Ovary (tissue), 10 donors: ENCODE measurements at regions of chr4 and their contacts with region 1.

Region 1: DNA sequence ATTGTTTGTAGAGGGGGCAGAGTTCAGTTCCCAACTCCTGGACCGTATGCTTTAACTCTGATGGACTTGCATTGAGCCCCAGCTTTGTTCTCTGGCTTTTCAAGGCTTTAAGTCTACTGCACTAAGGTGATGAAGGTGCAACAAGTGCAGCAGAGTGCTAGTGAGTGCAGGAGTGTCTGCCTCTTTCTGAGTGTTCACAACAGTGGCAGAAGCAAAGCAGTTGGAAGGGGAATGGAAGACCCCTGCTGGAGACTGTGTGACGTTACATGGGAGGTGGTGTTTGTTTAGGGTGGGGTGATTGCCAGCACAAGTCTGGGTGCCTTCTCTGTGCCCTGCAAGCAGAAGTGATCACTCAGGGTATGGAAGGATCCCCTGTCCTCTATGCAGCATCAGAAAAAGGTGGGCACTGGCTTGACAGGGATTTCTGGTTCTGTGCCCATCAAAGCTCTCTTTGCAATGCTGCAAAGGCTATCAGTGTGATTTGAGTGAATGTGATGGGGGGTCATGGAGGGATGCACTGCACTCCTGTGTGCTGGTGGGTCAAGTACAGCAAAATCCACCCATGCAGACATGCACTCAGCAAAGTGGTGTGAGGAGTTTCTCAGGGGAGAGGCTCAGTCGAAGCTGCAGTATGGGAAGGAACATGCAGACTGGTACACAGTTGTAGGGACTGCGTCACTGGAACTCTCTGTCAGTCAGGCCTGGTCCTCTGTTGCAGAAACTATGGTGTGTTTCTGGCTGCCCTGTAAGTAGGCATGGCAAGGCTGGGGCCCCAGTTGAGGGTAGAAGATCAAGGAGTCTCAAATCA is 70.9 kb upstream of the UGT2B7 start:
- DNase-seq: no peak
- H3K4me3 ChIP-seq: no peak overlapping the region
- H3K27ac ChIP-seq: no peak overlapping the region
- H3K4me1 ChIP-seq: no peaks in the 10 kb centered on the region
- H3K27me3 ChIP-seq: no peaks in the 10 kb centered on the region
- CTCF ChIP-seq: no peak
- EP300 ChIP-seq: no peak
- POLR2A ChIP-seq: no peak

Region 2: GRCh38 chr4:69057620-69058409 is 32.4 kb after region 1 on chr4:
- intact Hi-C with region 1: loop called in 1 of 4 experiments (anchors 2 kb)
- DNase-seq: no peak
- H3K4me3 ChIP-seq: no peak overlapping the region
- H3K27ac ChIP-seq: no peak overlapping the region
- H3K4me1 ChIP-seq: no peaks in the 10 kb centered on the region
- H3K27me3 ChIP-seq: no peaks in the 10 kb centered on the region
- CTCF ChIP-seq: no peak
- EP300 ChIP-seq: no peak
- POLR2A ChIP-seq: no peak

Region 3: GRCh38 chr4:69075061-69075792 is 49.8 kb after region 1 on chr4:
- intact Hi-C with region 1: no loop called
- DNase-seq: no peak
- H3K4me3 ChIP-seq: no peak overlapping the region
- H3K27ac ChIP-seq: no peak overlapping the region
- H3K4me1 ChIP-seq: no peaks in the 10 kb centered on the region
- H3K27me3 ChIP-seq: no peaks in the 10 kb centered on the region
- CTCF ChIP-seq: no peak
- EP300 ChIP-seq: no peak
- POLR2A ChIP-seq: no peak

Region 4: GRCh38 chr4:69104719-69105275 is 79.4 kb after region 1 on chr4:
- intact Hi-C with region 1: no loop called
- DNase-seq: no peak
- H3K4me3 ChIP-seq: no peak overlapping the region
- H3K27ac ChIP-seq: no peak overlapping the region
- H3K4me1 ChIP-seq: no peaks in the 10 kb centered on the region
- H3K27me3 ChIP-seq: no peaks in the 10 kb centered on the region
- CTCF ChIP-seq: no peak
- EP300 ChIP-seq: no peak
- POLR2A ChIP-seq: no peak

Region 5: GRCh38 chr4:69156913-69157312 is 131.5 kb after region 1 on chr4:
- intact Hi-C with region 1: no loop called
- DNase-seq: no peak
- H3K4me3 ChIP-seq: no peak overlapping the region
- H3K27ac ChIP-seq: no peak overlapping the region
- H3K4me1 ChIP-seq: no peaks in the 10 kb centered on the region
- H3K27me3 ChIP-seq: no peaks in the 10 kb centered on the region
- CTCF ChIP-seq: no peak
- EP300 ChIP-seq: no peak
- POLR2A ChIP-seq: no peak

Region 6: GRCh38 chr4:70449220-70449619 is 1423.8 kb after region 1 on chr4:
- intact Hi-C with region 1: no loop called
- DNase-seq: no peak
- H3K4me3 ChIP-seq: no peak overlapping the region
- H3K27ac ChIP-seq: no peak overlapping the region
- H3K4me1 ChIP-seq: no peaks in the 10 kb centered on the region
- H3K27me3 ChIP-seq: no peaks in the 10 kb centered on the region
- CTCF ChIP-seq: no peak
- EP300 ChIP-seq: no peak
- POLR2A ChIP-seq: no peak